ENCODE measurements at regions of chr7 and their contacts with region 1.

Region 1: GRCh38 chr7:151341357-151342101 is at the start of gene NUB1:
- DNase-seq: peak; percentile 92
- H3K4me3 Mint-ChIP-seq: peak within 1 kb of the TSS; percentile 75
- H3K27ac Mint-ChIP-seq: peak within 1 kb of the TSS; percentile 82
- H3K4me1 Mint-ChIP-seq: peaks cover 46% of the 10 kb centered on the region
- H3K27me3 Mint-ChIP-seq: no peaks in the 10 kb centered on the region
- total RNA-seq, gene NUB1: 46.6 to 50.3 TPM

Region 2: DNA sequence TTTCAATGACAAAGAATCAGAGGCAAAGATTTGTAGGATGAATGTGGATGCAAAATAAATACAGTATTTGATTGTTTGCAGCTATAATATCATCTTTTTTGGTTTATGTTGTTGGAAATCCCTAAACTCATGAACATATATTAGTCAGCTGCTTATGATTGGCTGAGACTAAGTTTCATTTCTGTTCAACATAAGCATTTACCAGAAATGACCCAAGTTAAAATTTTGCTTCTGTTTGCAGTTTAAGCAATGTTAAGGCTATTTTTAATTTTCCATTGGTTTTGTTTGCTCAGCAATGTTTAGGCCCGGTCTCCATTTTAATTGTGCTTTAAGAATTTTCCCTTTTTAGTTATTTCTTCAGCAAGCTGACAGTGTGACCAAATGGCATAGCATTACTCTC is 731.3 kb before region 1 on chr7:
- CTCF ChIA-PET with region 1: no interaction called
- intact Hi-C with region 1: loop called (anchors 10 kb)
- DNase-seq: no peak
- H3K4me3 Mint-ChIP-seq: no peak overlapping the region
- H3K27ac Mint-ChIP-seq: peak overlapping the region; percentile 92
- H3K4me1 Mint-ChIP-seq: peaks cover 83% of the 10 kb centered on the region
- H3K27me3 Mint-ChIP-seq: no peaks in the 10 kb centered on the region

Region 3: GRCh38 chr7:151408839-151409666 is 67.5 kb after region 1 on chr7:
- CTCF ChIA-PET with region 1: no interaction called
- intact Hi-C with region 1: no loop called
- DNase-seq: peak; percentile 27
- H3K4me3 Mint-ChIP-seq: peak overlapping the region; percentile 22
- H3K27ac Mint-ChIP-seq: no peak overlapping the region
- H3K4me1 Mint-ChIP-seq: peaks cover 35% of the 10 kb centered on the region
- H3K27me3 Mint-ChIP-seq: peaks cover 41% of the 10 kb centered on the region